ENCODE measurements at regions of chr6 and their contacts with region 1.

Region 1: GRCh38 chr6:107894821-107895396 is 63.1 kb downstream of the SEC63 start:
- DNase-seq: no peak
- ATAC-seq: no peak
- H3K4me3 ChIP-seq: no peak overlapping the region
- H3K4me3 Mint-ChIP-seq: no peak overlapping the region
- H3K27ac ChIP-seq: no peak overlapping the region
- H3K27ac Mint-ChIP-seq: no peak overlapping the region
- H3K4me1 ChIP-seq: no peaks in the 10 kb centered on the region
- H3K4me1 Mint-ChIP-seq: no peaks in the 10 kb centered on the region
- H3K27me3 ChIP-seq: no peaks in the 10 kb centered on the region
- H3K27me3 Mint-ChIP-seq: no peaks in the 10 kb centered on the region
- CTCF ChIP-seq: no peak

Region 2: GRCh38 chr6:107600936-107601335 is 294.0 kb before region 1 on chr6:
- CTCF ChIA-PET with region 1: no interaction called
- POLR2A ChIA-PET with region 1: no interaction called
- intact Hi-C with region 1: no loop called
- DNase-seq: no peak
- ATAC-seq: no peak
- H3K4me3 ChIP-seq: no peak overlapping the region
- H3K4me3 Mint-ChIP-seq: no peak overlapping the region
- H3K27ac ChIP-seq: no peak overlapping the region
- H3K27ac Mint-ChIP-seq: no peak overlapping the region
- H3K4me1 ChIP-seq: no peaks in the 10 kb centered on the region
- H3K4me1 Mint-ChIP-seq: no peaks in the 10 kb centered on the region
- H3K27me3 ChIP-seq: no peaks in the 10 kb centered on the region
- H3K27me3 Mint-ChIP-seq: peaks cover 5% of the 10 kb centered on the region
- CTCF ChIP-seq: no peak

Region 3: GRCh38 chr6:108009894-108010293 is 115.0 kb after region 1 on chr6:
- CTCF ChIA-PET with region 1: no interaction called
- POLR2A ChIA-PET with region 1: no interaction called
- intact Hi-C with region 1: no loop called
- DNase-seq: no peak
- ATAC-seq: no peak
- H3K4me3 ChIP-seq: no peak overlapping the region
- H3K4me3 Mint-ChIP-seq: no peak overlapping the region
- H3K27ac ChIP-seq: no peak overlapping the region
- H3K27ac Mint-ChIP-seq: no peak overlapping the region
- H3K4me1 ChIP-seq: no peaks in the 10 kb centered on the region
- H3K4me1 Mint-ChIP-seq: no peaks in the 10 kb centered on the region
- H3K27me3 ChIP-seq: no peaks in the 10 kb centered on the region
- H3K27me3 Mint-ChIP-seq: no peaks in the 10 kb centered on the region
- CTCF ChIP-seq: no peak

Region 4: GRCh38 chr6:108039681-108040080 is 144.8 kb after region 1 on chr6:
- CTCF ChIA-PET with region 1: no interaction called
- POLR2A ChIA-PET with region 1: no interaction called
- intact Hi-C with region 1: loop called in 1 of 2 experiments (anchors 10 kb)
- DNase-seq: no peak
- ATAC-seq: no peak
- H3K4me3 ChIP-seq: no peak overlapping the region
- H3K4me3 Mint-ChIP-seq: no peak overlapping the region
- H3K27ac ChIP-seq: no peak overlapping the region
- H3K27ac Mint-ChIP-seq: no peak overlapping the region
- H3K4me1 ChIP-seq: no peaks in the 10 kb centered on the region
- H3K4me1 Mint-ChIP-seq: no peaks in the 10 kb centered on the region
- H3K27me3 ChIP-seq: no peaks in the 10 kb centered on the region
- H3K27me3 Mint-ChIP-seq: no peaks in the 10 kb centered on the region
- CTCF ChIP-seq: no peak

Region 5: GRCh38 chr6:108667993-108668392 is 773.1 kb after region 1 on chr6:
- CTCF ChIA-PET with region 1: no interaction called
- POLR2A ChIA-PET with region 1: no interaction called
- intact Hi-C with region 1: no loop called
- DNase-seq: no peak
- ATAC-seq: no peak
- H3K4me3 ChIP-seq: no peak overlapping the region
- H3K4me3 Mint-ChIP-seq: no peak overlapping the region
- H3K27ac ChIP-seq: no peak overlapping the region
- H3K27ac Mint-ChIP-seq: no peak overlapping the region
- H3K4me1 ChIP-seq: peaks cover 3% of the 10 kb centered on the region
- H3K4me1 Mint-ChIP-seq: peaks cover 38% of the 10 kb centered on the region
- H3K27me3 ChIP-seq: no peaks in the 10 kb centered on the region
- H3K27me3 Mint-ChIP-seq: no peaks in the 10 kb centered on the region
- CTCF ChIP-seq: no peak

Measured in CD8-positive, alpha-beta T cell (primary cell).